Activated CD4-positive, alpha-beta T cell treated with anti-CD3 and anti-CD28 coated beads for 36 hours (primary cell): ENCODE measurements at regions of chr6 and their contacts with region 1.

Region 1: GRCh38 chr6:73653571-73654424 is at the start of gene SLC17A5:
- DNase-seq: peak; percentile 94
- ATAC-seq: peak; percentile 91
- H3K4me3 Mint-ChIP-seq: peak within 1 kb of the TSS; percentile 87
- H3K27ac Mint-ChIP-seq: peak within 1 kb of the TSS; percentile 94
- H3K4me1 Mint-ChIP-seq: peaks cover 29% of the 10 kb centered on the region
- H3K27me3 Mint-ChIP-seq: no peaks in the 10 kb centered on the region
- total RNA-seq, gene SLC17A5: 3.2 to 4.0 TPM

Region 2: GRCh38 chr6:73451223-73452107 is 202.3 kb before region 1 on chr6:
- CTCF ChIA-PET with region 1: interaction called, 3 read pairs
- POLR2A ChIA-PET with region 1: interaction called, 4 read pairs
- intact Hi-C with region 1: loop called in 1 of 2 experiments (anchors 2 kb)
- DNase-seq: peak; percentile 66
- ATAC-seq: peak; percentile 55
- H3K4me3 Mint-ChIP-seq: peak overlapping the region; percentile 87
- H3K27ac Mint-ChIP-seq: peak overlapping the region; percentile 90
- H3K4me1 Mint-ChIP-seq: peaks cover 32% of the 10 kb centered on the region
- H3K27me3 Mint-ChIP-seq: no peaks in the 10 kb centered on the region

Region 3: DNA sequence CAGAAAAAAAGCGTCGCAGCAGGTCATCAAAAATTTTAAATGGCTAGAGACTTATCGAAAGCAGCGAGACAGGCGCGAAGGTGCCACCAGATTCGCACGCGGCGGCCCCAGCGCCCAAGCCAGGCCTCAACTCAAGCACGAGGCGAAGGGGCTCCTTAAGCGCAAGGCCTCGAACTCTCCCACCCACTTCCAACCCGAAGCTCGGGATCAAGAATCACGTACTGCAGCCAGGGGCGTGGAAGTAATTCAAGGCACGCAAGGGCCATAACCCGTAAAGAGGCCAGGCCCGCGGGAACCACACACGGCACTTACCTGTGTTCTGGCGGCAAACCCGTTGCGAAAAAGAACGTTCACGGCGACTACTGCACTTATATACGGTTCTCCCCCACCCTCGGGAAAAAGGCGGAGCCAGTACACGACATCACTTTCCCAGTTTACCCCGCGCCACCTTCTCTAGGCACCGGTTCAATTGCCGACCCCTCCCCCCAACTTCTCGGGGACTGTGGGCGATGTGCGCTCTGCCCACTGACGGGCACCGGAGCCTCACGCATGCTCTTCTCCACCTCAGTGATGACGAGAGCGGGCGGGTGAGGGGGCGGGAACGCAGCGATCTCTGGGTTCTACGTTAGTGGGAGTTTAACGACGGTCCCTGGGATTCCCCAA is 133.0 kb before region 1 on chr6 and contains the start of gene EEF1A1:
- CTCF ChIA-PET with region 1: interaction called, 25 read pairs
- POLR2A ChIA-PET with region 1: interaction called, 29 read pairs
- intact Hi-C with region 1: loop called (anchors 1 to 2 kb)
- DNase-seq: peak; percentile 100
- ATAC-seq: peak; percentile 80
- H3K4me3 Mint-ChIP-seq: peak within 1 kb of the TSS; percentile 97
- H3K27ac Mint-ChIP-seq: peak within 1 kb of the TSS; percentile 98
- H3K4me1 Mint-ChIP-seq: peaks cover 25% of the 10 kb centered on the region
- H3K27me3 Mint-ChIP-seq: no peaks in the 10 kb centered on the region
- total RNA-seq, gene EEF1A1: 11,209 to 15,482 TPM

Region 4: GRCh38 chr6:73548458-73549446 is 105.0 kb before region 1 on chr6:
- CTCF ChIA-PET with region 1: no interaction called
- POLR2A ChIA-PET with region 1: no interaction called
- intact Hi-C with region 1: no loop called
- DNase-seq: no peak
- ATAC-seq: no peak
- H3K4me3 Mint-ChIP-seq: no peak overlapping the region
- H3K27ac Mint-ChIP-seq: no peak overlapping the region
- H3K4me1 Mint-ChIP-seq: no peaks in the 10 kb centered on the region
- H3K27me3 Mint-ChIP-seq: no peaks in the 10 kb centered on the region

Region 5: DNA sequence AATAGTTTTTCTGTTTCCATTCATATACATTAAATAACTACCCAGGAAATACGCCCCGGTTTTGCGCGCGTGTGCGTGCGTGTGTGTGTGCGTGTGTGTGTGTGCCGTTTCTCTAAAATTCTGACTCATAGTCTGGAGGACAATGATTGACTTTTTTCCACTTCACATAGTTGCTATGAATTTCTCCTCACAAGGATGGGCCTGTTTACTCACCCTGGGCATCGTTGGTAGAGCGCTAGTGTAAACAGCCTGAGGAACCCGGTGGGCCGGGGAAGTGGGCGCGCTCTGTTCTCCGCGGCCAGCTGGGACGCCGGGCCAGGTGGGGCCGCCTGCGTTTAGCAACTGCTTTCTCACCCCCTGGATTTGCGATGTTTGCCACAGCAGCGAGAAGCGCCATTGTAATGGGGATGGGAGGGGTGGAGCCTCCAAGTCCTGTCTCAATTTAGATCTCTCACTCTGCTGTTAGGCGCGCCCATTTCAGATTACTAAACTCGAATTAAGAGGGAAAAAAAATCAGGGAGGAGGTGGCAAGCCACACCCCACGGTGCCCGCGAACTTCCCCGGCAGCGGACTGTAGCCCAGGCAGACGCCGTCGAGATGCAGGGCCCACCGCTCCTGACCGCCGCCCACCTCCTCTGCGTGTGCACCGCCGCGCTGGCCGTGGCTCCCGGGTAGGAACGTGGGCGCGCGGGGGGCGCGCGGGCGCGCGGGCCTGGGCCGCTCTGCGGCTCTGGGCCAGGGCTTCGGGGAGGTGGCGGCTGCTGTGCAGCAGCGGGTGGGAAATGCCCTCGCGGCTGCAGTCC is 42.0 kb after region 1 on chr6 and contains the start of gene CD109:
- CTCF ChIA-PET with region 1: interaction called, 4 read pairs
- POLR2A ChIA-PET with region 1: no interaction called
- intact Hi-C with region 1: loop called (anchors 1 to 2 kb)
- DNase-seq: peak; percentile 88
- ATAC-seq: peak; percentile 86
- H3K4me3 Mint-ChIP-seq: peak within 1 kb of the TSS; percentile 81
- H3K27ac Mint-ChIP-seq: peak within 1 kb of the TSS; percentile 96
- H3K4me1 Mint-ChIP-seq: peaks cover 44% of the 10 kb centered on the region
- H3K27me3 Mint-ChIP-seq: peaks cover 8% of the 10 kb centered on the region
- total RNA-seq, gene CD109: 13.2 to 15.8 TPM

Region 6: DNA sequence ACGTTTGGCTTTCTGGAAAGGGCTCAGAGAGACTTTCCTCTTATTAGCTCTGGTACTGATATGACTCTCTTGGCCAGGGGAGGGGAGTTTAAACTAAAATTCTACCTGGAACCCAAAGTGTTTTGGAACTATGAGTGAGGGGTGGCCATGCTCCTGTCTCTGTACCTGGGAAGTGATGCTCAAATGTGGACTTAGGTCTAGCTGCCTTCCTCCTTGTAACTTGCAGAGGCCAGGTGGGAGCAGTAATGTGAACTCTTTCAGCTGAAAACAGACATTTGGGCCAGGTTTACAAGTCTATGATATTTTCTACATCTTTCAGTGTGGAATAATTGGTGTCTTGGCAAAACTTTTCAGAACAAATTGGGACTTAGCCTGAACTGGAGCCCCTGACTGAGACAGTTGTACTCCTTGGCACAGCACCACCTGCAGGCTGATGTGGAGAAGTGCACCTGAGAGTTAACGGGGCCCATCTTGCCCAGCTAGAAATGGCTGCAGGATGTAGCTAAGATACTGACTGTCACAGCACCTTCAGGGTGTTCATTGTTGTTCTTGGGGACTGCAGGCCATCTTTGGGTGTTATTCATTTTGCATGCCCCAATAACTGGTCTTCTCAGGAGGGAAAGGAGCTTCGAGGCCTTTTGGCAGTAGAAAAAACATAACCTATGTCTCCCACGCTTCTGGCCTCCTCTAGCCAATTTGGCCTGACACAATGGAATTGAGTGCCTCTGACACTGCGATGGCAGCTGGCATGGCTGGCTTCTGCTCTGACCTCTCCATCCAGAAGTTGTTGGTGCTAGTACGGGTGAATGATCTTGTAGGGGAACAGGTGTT is 79.3 kb after region 1 on chr6:
- CTCF ChIA-PET with region 1: interaction called, 15 read pairs
- POLR2A ChIA-PET with region 1: interaction called, 4 read pairs
- intact Hi-C with region 1: no loop called
- DNase-seq: peak; percentile 85
- ATAC-seq: peak; percentile 81
- H3K4me3 Mint-ChIP-seq: no peak overlapping the region
- H3K27ac Mint-ChIP-seq: no peak overlapping the region
- H3K4me1 Mint-ChIP-seq: peaks cover 14% of the 10 kb centered on the region
- H3K27me3 Mint-ChIP-seq: no peaks in the 10 kb centered on the region